GM12878 (cell line): ENCODE measurements at regions of chr3 and their contacts with region 1.

Region 1: DNA sequence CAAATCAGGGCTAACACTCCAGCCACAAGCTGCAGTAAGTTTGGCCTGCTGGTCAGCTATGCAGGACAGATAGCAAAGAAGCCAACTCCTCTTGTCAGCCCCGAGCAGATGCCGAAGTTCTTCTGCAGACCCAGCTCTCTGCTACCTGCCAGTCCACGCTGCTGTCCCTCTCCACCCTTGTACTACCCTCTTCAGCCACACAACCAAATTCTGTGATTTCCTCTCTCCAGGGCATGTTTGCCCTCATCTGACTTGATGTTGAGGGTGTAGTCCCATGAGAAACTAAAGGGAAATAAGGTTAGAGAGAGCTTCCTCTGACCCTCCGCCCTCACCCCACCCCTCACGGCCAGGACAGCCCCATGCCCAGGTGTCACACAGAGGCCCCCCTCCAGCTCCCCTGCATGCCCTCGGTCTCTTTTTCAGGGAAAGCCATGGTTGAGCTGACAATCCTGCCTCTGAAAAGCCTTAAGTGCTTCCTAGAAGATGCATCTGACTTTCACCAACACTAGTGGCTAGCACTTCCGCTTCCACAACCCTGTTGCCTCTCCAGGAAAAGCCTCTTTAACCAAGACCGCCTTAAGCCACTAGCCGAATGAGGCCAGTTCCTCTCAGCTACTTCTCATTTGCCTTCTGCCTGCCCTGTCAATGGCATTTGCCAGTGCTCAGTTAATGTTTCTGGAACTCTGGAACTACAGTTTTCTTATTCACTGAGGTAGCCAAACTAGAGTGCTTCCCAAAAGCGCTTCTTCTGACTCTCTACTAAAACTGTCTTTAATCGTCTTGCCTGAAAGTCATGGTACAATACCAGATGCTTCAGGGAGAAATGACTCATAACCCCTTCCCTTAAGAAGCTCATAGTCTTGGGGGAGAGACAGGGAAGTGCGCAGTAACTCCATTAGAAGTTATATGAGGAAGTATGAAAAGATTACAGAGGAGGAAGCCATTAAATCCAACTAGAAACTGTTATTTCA is 300.4 kb upstream of the STT3B start:
- DNase-seq: no peak
- ATAC-seq: peak; percentile 23
- H3K4me3 ChIP-seq: no peak overlapping the region
- H3K27ac ChIP-seq: peak overlapping the region; percentile 57
- H3K4me1 ChIP-seq: peaks cover 37% of the 10 kb centered on the region
- H3K27me3 ChIP-seq: no peaks in the 10 kb centered on the region
- CTCF ChIP-seq: no peak
- EP300 ChIP-seq: no peak
- POLR2A ChIP-seq: no peak
- RAD21 ChIP-seq: no peak

Region 2: DNA sequence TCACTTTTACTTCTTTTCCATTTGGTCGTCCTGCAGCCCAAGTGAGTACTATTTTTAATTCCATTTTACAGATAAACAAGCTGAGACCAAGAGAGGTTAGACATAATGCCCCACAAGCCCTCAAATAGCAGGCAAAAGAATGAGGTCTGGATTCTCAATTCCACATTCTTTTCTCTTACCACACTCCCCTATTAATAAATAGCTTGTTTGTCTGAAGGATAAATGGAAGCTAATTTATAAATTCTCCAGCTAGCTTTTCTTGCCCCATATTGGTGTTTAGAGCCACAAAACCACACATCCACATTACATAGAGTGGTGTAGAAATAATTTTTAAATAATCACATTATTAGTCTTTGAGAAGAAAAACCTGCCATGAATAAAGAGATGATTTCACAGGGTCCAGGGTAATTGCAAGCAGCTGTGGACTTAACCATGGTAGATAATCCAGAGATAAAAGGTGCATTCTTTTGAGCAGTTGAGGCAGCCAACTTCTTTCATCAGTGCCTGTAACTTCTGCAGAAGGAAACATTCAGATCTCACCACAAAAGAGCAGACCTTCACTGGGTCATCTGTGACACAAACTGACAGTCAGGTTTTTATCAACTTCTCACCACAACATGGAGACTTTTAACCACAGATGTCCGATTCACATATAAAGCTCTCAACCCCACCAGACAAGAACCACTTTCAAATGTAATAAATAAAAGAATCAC is 13.1 kb before region 1 on chr3:
- CTCF ChIA-PET with region 1: interaction called, 17 read pairs
- POLR2A ChIA-PET with region 1: interaction called, 5 read pairs
- RAD21 ChIA-PET with region 1: interaction called, 21 read pairs
- SMC1A ChIA-PET with region 1: interaction called, 76 read pairs
- in situ Hi-C with region 1: no loop called
- intact Hi-C with region 1: no loop called
- DNase-seq: peak; percentile 84
- ATAC-seq: peak; percentile 84
- H3K4me3 ChIP-seq: no peak overlapping the region
- H3K27ac ChIP-seq: peak overlapping the region; percentile 51
- H3K4me1 ChIP-seq: peaks cover 28% of the 10 kb centered on the region
- H3K27me3 ChIP-seq: no peaks in the 10 kb centered on the region
- CTCF ChIP-seq: no peak
- EP300 ChIP-seq: peak; percentile 57 to 86; a peak in 3 of 4 replicates
- POLR2A ChIP-seq: no peak
- RAD21 ChIP-seq: peak; percentile 30